Esophagus muscularis mucosa (tissue), 4 donors: ENCODE measurements at regions of chr11 and their contacts with region 1.

Region 1: DNA sequence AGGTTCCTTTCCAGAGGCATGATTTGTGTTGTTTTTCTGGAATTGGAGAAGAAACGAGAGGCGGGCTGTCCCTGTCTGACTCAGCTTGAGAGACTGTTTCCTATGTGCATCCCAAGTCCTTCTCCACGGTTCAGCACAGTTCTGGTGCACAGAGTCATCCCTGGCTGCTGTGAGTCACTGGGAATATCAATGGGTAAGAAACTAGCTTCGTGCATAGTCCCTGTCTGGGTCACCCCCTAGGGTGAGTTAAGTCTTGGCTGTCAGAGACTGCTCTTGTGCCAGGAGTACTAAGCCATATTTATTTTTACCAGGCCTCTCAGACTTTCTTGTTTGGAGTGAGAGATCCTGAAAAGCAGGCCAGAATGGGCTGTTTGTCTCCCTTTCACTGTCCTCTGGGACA is 2.4 kb upstream of the LRP4 start:
- DNase-seq: no peak
- H3K4me3 ChIP-seq: no peak overlapping the region
- H3K27ac ChIP-seq: peak overlapping the region; percentile 42 to 69 (median 64)
- H3K4me1 ChIP-seq: peaks cover 29 to 56% (median 53%) of the 10 kb centered on the region in 4 donors
- H3K27me3 ChIP-seq: peaks cover 0 to 10% (median 0%) of the 10 kb centered on the region in 4 donors
- CTCF ChIP-seq: no peak
- EP300 ChIP-seq: no peak
- POLR2A ChIP-seq: no peak

Region 2: GRCh38 chr11:46808799-46809431 is 111.8 kb before region 1 on chr11:
- intact Hi-C with region 1: no loop called
- DNase-seq: no peak
- H3K4me3 ChIP-seq: no peak overlapping the region
- H3K27ac ChIP-seq: no peak overlapping the region
- H3K4me1 ChIP-seq: no peaks in the 10 kb centered on the region
- H3K27me3 ChIP-seq: no peaks in the 10 kb centered on the region
- CTCF ChIP-seq: peak in 1 of 3 experiments; percentile 3
- EP300 ChIP-seq: no peak
- POLR2A ChIP-seq: no peak

Region 3: DNA sequence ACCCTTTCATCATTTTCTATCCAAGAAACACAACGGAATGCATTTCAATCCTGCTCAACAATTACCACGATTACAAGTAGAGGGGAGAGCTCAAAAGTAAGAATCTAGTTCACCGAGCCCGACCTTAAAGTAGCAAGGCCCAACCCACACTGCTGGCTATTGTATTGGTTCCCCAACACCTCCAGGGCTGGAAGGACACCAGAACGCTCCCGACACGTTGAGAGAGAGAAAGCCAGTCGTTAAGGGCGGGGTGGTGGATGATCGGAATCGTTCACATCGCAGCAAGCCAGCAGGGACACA is 75.4 kb before region 1 on chr11:
- intact Hi-C with region 1: no loop called
- DNase-seq: no peak
- H3K4me3 ChIP-seq: peak overlapping the region; percentile 83 to 99 (median 92)
- H3K27ac ChIP-seq: peak overlapping the region; percentile 82 to 90 (median 89)
- H3K4me1 ChIP-seq: peaks cover 16 to 31% (median 23%) of the 10 kb centered on the region in 4 donors
- H3K27me3 ChIP-seq: no peaks in the 10 kb centered on the region
- CTCF ChIP-seq: no peak
- EP300 ChIP-seq: no peak
- POLR2A ChIP-seq: no peak

Region 4: DNA sequence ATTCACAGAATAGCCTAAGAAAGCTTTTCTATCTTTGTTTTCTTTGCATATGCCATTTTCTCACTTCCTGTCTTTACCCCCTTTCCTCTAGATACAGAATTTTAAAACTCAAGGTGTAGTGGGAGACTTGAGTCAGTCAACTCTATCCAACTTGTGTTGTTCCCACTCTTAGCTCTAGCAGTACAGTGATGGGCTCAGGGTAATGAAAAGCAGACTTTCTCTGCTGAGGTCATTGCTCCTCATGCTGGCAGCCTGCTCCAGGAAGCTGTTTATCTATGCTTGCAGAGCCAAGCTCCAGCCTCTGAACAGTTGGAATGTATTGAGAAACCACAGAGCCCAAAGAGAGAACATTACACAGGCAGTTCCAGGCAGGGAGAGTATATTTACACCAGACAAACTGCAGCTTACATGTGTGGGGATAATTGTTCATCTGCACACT is 83.9 kb after region 1 on chr11:
- intact Hi-C with region 1: loop called (anchors 5 kb)
- DNase-seq: peak; percentile 93
- H3K4me3 ChIP-seq: no peak overlapping the region
- H3K27ac ChIP-seq: peak overlapping the region; percentile 55 to 81 (median 70)
- H3K4me1 ChIP-seq: peaks cover 27 to 54% (median 43%) of the 10 kb centered on the region in 4 donors
- H3K27me3 ChIP-seq: no peaks in the 10 kb centered on the region
- CTCF ChIP-seq: no peak
- EP300 ChIP-seq: no peak
- POLR2A ChIP-seq: no peak

Region 5: DNA sequence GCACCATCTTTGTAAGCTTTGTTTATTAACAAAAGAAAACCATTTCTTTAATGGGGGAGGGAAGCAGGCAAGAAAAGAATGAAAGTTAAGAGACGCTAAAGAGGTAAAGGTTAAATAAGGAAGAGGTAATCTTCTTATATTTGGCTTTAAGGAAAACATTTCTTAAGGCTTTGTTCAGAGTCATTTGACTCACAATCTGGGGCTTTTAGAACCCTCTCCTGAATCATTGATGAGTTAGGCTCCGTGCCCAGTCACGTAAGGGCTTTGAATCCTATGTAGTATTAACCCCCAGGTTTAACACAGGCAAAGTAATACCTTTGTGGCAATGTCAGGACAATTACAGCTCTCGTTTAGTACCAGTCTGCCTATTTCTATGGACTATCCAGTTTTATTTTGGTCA is 375.3 kb after region 1 on chr11:
- intact Hi-C with region 1: no loop called
- DNase-seq: no peak
- H3K4me3 ChIP-seq: no peak overlapping the region
- H3K27ac ChIP-seq: no peak overlapping the region
- H3K4me1 ChIP-seq: no peaks in the 10 kb centered on the region
- H3K27me3 ChIP-seq: no peaks in the 10 kb centered on the region
- CTCF ChIP-seq: no peak
- EP300 ChIP-seq: no peak
- POLR2A ChIP-seq: no peak